Activated CD4-positive, alpha-beta T cell treated with anti-CD3 and anti-CD28 coated beads for 36 hours (primary cell): ENCODE measurements at regions of chr5 and their contacts with region 1.

Region 1: GRCh38 chr5:115169487-115170133 is at the start of gene TRIM36:
- DNase-seq: peak; percentile 96
- ATAC-seq: peak; percentile 98
- H3K4me3 Mint-ChIP-seq: peak within 1 kb of the TSS; percentile 75
- H3K27ac Mint-ChIP-seq: no peak within 1 kb of the TSS
- H3K4me1 Mint-ChIP-seq: peaks cover 6% of the 10 kb centered on the region
- H3K27me3 Mint-ChIP-seq: peaks cover 56% of the 10 kb centered on the region
- total RNA-seq, gene TRIM36: 0.11 TPM in 1 of 2 experiments, not detected in the other

Region 2: GRCh38 chr5:115098041-115098702 is 71.4 kb before region 1 on chr5:
- CTCF ChIA-PET with region 1: no interaction called
- POLR2A ChIA-PET with region 1: no interaction called
- intact Hi-C with region 1: loop called in 1 of 2 experiments (anchors 5 kb)
- DNase-seq: peak; percentile 49
- ATAC-seq: peak; percentile 71
- H3K4me3 Mint-ChIP-seq: no peak overlapping the region
- H3K27ac Mint-ChIP-seq: no peak overlapping the region
- H3K4me1 Mint-ChIP-seq: no peaks in the 10 kb centered on the region
- H3K27me3 Mint-ChIP-seq: peaks cover 12% of the 10 kb centered on the region

Region 3: DNA sequence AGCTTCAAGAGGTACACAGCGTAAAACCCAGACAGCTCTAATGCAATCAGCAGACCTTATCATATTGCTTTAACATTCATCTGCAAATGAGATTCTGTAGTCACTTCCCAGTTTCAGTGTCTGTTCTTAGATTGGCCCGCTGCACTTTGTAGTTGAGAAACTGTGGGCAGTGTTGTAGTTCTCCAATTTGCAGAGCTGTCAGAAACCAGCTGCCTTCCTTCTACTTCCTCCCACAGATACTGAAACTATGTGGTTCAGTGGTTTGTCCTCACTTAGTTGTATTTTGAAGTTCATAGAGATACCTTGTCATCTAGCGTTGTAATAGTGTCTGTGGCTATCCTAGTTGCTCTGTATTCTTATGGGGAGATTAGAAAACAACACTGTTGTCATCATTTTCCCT is 39.7 kb after region 1 on chr5:
- CTCF ChIA-PET with region 1: interaction called, 3 read pairs
- POLR2A ChIA-PET with region 1: no interaction called
- intact Hi-C with region 1: loop called (anchors 1 kb)
- DNase-seq: peak; percentile 71
- ATAC-seq: peak; percentile 96
- H3K4me3 Mint-ChIP-seq: no peak overlapping the region
- H3K27ac Mint-ChIP-seq: no peak overlapping the region
- H3K4me1 Mint-ChIP-seq: peaks cover 13% of the 10 kb centered on the region
- H3K27me3 Mint-ChIP-seq: no peaks in the 10 kb centered on the region

Region 4: DNA sequence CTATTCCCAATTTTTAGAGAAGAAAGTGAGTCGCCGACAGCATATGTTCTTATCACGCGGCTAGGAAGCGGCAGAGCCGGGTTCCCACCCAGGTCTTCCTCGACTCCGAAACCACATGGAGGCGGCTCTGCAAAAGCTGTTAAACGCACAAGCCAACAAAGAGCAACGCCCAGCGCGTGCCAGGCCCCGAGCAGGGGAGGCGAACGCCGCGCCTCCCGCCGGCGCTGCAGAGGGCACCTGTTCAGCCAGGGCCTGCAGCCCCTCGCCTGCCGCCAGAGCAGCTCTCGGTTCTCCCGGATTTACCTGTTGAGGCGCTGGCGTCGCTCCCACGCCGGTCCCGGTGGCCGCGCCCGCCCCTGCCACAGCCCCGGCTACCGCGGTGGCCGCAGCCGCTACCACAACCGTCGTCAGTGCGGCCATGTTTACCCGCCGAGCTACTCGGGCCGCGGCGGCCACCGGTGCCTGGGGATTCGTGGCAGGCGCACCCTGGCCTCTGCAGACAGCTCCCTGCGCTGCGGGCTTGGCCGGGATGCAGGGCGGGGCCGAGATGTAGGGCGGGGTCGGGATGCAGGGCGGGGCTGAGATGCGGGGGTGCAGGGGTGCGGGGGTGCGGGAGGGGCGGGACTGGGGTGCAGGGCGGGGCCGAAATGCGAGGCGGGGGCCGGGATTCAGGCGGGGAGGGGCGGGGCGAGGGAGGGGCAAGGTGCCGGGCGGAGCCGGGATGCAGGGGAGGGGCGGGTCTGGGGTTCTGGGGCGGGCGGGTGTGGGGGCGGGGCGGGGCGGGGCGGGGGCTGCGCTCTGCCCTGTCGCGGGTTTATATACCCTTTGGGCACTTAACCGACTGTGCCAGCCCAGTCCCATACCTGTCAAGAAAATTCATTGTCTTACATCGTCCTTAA is 126.8 kb after region 1 on chr5 and contains the start of gene CCDC112:
- CTCF ChIA-PET with region 1: interaction called, 3 read pairs
- POLR2A ChIA-PET with region 1: no interaction called
- intact Hi-C with region 1: loop called in 1 of 2 experiments (anchors 1 kb)
- DNase-seq: peak; percentile 94
- ATAC-seq: peak; percentile 93
- H3K4me3 Mint-ChIP-seq: peak within 1 kb of the TSS; percentile 77
- H3K27ac Mint-ChIP-seq: peak within 1 kb of the TSS; percentile 44
- H3K4me1 Mint-ChIP-seq: peaks cover 7% of the 10 kb centered on the region
- H3K27me3 Mint-ChIP-seq: peaks cover 3% of the 10 kb centered on the region
- total RNA-seq, gene CCDC112: 2.2 to 4.1 TPM

Region 5: GRCh38 chr5:115544436-115545350 is 375.1 kb after region 1 on chr5 and contains the start of gene FEM1C:
- CTCF ChIA-PET with region 1: no interaction called
- POLR2A ChIA-PET with region 1: no interaction called
- intact Hi-C with region 1: loop called (anchors 1 to 2 kb)
- DNase-seq: peak; percentile 100
- ATAC-seq: peak; percentile 93
- H3K4me3 Mint-ChIP-seq: peak within 1 kb of the TSS; percentile 96
- H3K27ac Mint-ChIP-seq: peak within 1 kb of the TSS; percentile 97
- H3K4me1 Mint-ChIP-seq: peaks cover 41% of the 10 kb centered on the region
- H3K27me3 Mint-ChIP-seq: no peaks in the 10 kb centered on the region
- total RNA-seq, gene FEM1C: 15.8 to 15.9 TPM